ENCODE measurements at regions of chr14 and their contacts with region 1.

Region 1: DNA sequence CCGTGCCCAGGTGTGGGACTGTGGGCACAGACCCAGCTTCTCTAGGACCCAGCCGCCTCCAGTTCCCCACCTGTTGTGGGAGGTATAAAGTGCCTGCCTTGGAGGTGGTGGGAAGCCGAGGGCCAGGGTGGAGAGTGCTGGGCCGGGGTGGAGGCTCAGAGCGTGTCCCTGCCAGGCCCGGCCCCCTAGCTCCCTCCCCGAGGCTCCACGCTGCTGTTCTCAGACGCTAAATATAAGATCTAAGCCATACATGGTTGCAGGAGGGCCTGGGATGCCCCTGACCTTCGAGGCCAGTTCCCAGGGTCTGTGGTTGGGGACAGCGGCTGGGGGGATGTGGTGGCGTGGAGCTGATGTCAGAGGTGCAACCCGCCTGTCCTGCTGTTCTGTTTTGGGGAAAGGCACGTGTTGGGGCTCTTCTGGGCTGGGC is 10.8 kb downstream of the INF2 start:
- DNase-seq: no peak
- ATAC-seq: peak; percentile 4 to 16

Region 2: GRCh38 chr14:104445832-104446381 is 254.3 kb before region 1 on chr14:
- intact Hi-C with region 1: no loop called
- DNase-seq: no peak
- ATAC-seq: no peak

Region 3: GRCh38 chr14:104650057-104650981 is 49.9 kb before region 1 on chr14:
- intact Hi-C with region 1: loop called (anchors 5 kb)
- DNase-seq: peak; percentile 66
- ATAC-seq: peak; percentile 87 to 92

Region 4: GRCh38 chr14:104743461-104744380 is 43.5 kb after region 1 on chr14:
- intact Hi-C with region 1: no loop called
- DNase-seq: no peak
- ATAC-seq: no peak

Measured in left cardiac atrium (tissue), 4 donors.